ENCODE measurements at regions of chr4 and their contacts with region 1.

Region 1: DNA sequence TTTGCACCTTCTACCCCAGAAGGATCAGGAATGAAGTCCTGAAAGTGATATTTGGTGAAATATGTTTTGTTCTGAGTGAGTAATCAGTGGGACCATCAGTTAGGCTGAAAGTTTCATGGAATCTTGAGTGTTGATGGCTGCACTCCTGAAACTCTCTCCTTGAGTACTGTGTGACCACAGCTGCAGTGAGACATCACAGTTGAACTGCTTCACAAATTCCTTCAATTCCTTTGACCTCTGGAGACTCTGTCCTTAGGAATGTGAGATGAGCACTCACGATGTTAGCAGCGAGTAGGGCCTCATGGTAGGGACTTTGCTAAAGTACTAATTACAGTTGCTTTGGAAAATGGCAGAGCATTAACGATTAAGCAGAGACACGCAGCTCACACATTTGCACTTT is 142.9 kb upstream of the SLC4A4 start:
- DNase-seq: no peak
- H3K4me3 ChIP-seq: no peak overlapping the region
- H3K4me3 Mint-ChIP-seq: no peak overlapping the region
- H3K27ac ChIP-seq: no peak overlapping the region
- H3K27ac Mint-ChIP-seq: peak overlapping the region in 1 of 8 donors; percentile 16
- H3K4me1 ChIP-seq: peaks cover 6% of the 10 kb centered on the region
- H3K4me1 Mint-ChIP-seq: peaks cover 24 to 31% (median 29%) of the 10 kb centered on the region in 3 donors
- H3K27me3 ChIP-seq: no peaks in the 10 kb centered on the region
- H3K27me3 Mint-ChIP-seq: peaks cover 0 to 4% of the 10 kb centered on the region in 2 donors

Region 2: DNA sequence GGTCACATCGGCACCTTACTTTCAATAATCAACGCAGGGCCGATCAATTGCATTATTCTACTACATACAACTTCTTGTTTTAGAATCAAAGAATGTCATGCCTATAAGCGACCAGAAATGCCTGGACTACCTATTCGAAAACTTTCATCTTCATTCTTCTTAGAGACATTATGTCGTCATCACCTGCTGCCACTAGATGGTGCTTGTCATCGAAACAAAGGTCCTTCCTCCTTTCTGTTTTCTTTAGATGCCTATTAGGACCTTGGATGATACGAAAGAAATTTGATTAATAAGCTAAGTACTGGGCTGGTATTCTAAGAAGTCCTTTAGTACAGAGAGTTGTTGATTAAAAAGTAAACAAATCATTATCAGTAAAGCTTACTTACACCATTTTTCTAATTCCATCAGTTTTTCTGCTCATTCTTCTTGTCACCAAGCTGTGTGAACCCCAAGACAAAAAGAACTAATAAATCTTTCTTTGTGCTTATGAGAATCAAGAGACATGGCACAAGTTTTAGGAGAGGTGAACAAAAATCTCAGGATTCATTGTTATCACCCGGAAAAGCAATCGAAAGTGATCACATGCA is 11.6 kb before region 1 on chr4:
- CTCF ChIA-PET with region 1: interaction called, 11 read pairs
- POLR2A ChIA-PET with region 1: interaction called, 5 read pairs
- DNase-seq: peak; percentile 7 to 53 (median 37)
- H3K4me3 ChIP-seq: no peak overlapping the region
- H3K4me3 Mint-ChIP-seq: peak overlapping the region in 4 of 7 donors; percentile 6 to 83 (median 32)
- H3K27ac ChIP-seq: no peak overlapping the region
- H3K27ac Mint-ChIP-seq: peak overlapping the region in 6 of 8 donors; percentile 2 to 79 (median 21)
- H3K4me1 ChIP-seq: peaks cover 23% of the 10 kb centered on the region
- H3K4me1 Mint-ChIP-seq: peaks cover 26 to 38% (median 38%) of the 10 kb centered on the region in 3 donors
- H3K27me3 ChIP-seq: peaks cover 4% of the 10 kb centered on the region
- H3K27me3 Mint-ChIP-seq: peaks cover 4 to 7% of the 10 kb centered on the region in 2 donors

Region 3: GRCh38 chr4:71209161-71209560 is 13.2 kb after region 1 on chr4:
- CTCF ChIA-PET with region 1: no interaction called
- POLR2A ChIA-PET with region 1: no interaction called
- DNase-seq: no peak
- H3K4me3 ChIP-seq: no peak overlapping the region
- H3K4me3 Mint-ChIP-seq: no peak overlapping the region
- H3K27ac ChIP-seq: no peak overlapping the region
- H3K27ac Mint-ChIP-seq: no peak overlapping the region
- H3K4me1 ChIP-seq: no peaks in the 10 kb centered on the region
- H3K4me1 Mint-ChIP-seq: peaks cover 2 to 4% (median 4%) of the 10 kb centered on the region in 3 donors
- H3K27me3 ChIP-seq: no peaks in the 10 kb centered on the region
- H3K27me3 Mint-ChIP-seq: peaks cover 0 to 2% of the 10 kb centered on the region in 2 donors